ENCODE measurements at regions of chr9 and their contacts with region 1.

Region 1: DNA sequence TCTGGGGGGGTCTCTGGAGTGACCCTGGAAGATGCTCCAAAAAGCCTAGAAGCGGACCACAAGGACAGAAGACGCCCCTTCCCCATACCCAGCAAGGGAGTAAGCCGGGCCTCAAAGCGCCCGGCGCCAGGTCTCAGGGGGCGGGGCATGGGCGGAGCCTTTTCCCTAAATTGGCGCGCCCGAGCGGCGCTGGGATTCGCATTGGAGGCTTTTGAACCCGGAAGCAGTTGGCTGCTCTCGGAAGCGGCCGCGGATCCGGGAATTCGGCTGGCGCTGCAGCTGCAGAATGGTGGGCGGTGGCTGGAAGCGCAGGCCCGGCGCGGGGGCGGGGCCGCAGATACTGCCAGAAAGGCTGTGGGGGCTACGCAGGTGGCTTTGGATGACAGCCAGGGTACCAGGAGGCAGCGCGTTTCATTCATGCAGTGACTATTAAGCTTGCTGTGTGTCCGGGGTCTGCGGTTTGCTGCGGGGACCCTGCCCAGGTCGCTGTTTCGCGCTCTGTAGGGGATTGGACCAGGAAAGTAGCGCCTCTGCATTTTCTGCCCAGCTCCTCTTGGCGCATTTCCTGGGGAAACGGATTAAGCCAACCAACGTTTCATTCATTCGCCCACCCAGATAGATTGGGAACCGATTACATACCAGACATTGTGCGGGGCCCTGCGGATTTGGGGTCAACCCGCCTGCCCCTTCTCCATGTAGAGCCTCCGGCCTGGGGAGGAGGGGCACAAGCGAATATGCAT is 83.0 kb upstream of the FREM1 start:
- DNase-seq: peak; percentile 76 to 93 (median 85)
- H3K4me3 ChIP-seq: peak overlapping the region; percentile 60
- H3K27ac ChIP-seq: no peak overlapping the region
- H3K4me1 ChIP-seq: peaks cover 4% of the 10 kb centered on the region
- H3K27me3 ChIP-seq: no peaks in the 10 kb centered on the region
- CTCF ChIP-seq: no peak
- EP300 ChIP-seq: no peak
- POLR2A ChIP-seq: no peak

Region 2: GRCh38 chr9:15010581-15010980 is 17.4 kb after region 1 on chr9:
- intact Hi-C with region 1: loop called in 1 of 4 experiments (anchors 2 kb)
- DNase-seq: no peak
- H3K4me3 ChIP-seq: no peak overlapping the region
- H3K27ac ChIP-seq: no peak overlapping the region
- H3K4me1 ChIP-seq: no peaks in the 10 kb centered on the region
- H3K27me3 ChIP-seq: no peaks in the 10 kb centered on the region
- CTCF ChIP-seq: no peak
- EP300 ChIP-seq: no peak
- POLR2A ChIP-seq: no peak